HepG2 (cell line): ENCODE measurements at regions of chr17 and their contacts with region 1.

Region 1: DNA sequence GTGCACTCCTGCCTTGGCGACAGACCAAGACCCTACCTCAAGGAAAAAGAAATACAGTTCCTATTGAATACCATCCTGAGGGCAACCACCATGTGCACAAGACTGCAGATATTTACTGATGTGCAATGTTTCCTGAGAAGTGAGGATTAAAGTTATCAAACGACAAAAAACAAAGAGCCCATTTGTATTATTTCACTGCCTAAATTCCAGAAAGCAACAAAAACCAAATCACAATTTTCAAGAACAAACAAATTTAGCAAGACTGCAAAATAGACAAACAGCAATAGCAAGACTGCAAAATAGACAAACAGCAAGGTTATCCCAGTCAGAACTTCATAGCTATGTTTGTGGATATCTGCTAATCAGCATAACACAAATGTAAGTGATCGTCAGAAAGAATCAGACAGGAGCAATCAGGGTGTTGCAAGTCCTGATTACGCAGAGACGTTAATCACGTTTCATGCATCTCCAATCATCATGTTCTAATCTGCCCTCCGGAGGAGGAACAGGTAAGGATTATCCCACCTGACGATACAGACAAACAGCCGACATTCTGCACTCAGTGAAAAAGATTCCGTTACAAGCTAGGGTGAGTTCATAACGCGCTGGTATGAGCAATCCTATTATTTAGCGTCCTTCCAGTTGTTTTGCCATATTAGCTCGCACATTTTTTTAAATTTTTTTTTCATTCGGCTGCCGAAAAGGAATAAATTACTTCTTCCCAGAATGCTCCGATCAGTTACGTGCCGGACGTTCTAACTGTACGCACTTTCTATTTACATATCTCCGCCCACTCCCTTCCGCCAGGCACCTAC is 2.9 kb downstream of the TMEM107 start:
- DNase-seq: peak; percentile 98
- ATAC-seq: peak; percentile 70
- H3K4me3 ChIP-seq: peak overlapping the region; percentile 60 to 78 (median 73)
- H3K27ac ChIP-seq: peak overlapping the region; percentile 97
- H3K4me1 ChIP-seq: peaks cover 46% of the 10 kb centered on the region
- H3K27me3 ChIP-seq: no peaks in the 10 kb centered on the region; a peak in 1 of 5 replicates
- CTCF ChIP-seq: no peak
- EP300 ChIP-seq: peak; percentile 12 to 83; a peak in 3 of 4 replicates
- POLR2A ChIP-seq: peak; percentile 100
- RAD21 ChIP-seq: peak; percentile 70

Region 2: GRCh38 chr17:8029135-8029534 is 144.1 kb before region 1 on chr17:
- CTCF ChIA-PET with region 1: no interaction called
- POLR2A ChIA-PET with region 1: no interaction called
- in situ Hi-C with region 1: no loop called
- intact Hi-C with region 1: no loop called
- DNase-seq: no peak
- ATAC-seq: no peak
- H3K4me3 ChIP-seq: no peak overlapping the region
- H3K27ac ChIP-seq: no peak overlapping the region
- H3K4me1 ChIP-seq: peaks cover 19% of the 10 kb centered on the region
- H3K27me3 ChIP-seq: peaks cover 1 to 27% of the 10 kb centered on the region in 2 experiments; a peak in 2 of 5 replicates
- CTCF ChIP-seq: no peak
- EP300 ChIP-seq: no peak
- POLR2A ChIP-seq: no peak
- RAD21 ChIP-seq: no peak

Region 3: DNA sequence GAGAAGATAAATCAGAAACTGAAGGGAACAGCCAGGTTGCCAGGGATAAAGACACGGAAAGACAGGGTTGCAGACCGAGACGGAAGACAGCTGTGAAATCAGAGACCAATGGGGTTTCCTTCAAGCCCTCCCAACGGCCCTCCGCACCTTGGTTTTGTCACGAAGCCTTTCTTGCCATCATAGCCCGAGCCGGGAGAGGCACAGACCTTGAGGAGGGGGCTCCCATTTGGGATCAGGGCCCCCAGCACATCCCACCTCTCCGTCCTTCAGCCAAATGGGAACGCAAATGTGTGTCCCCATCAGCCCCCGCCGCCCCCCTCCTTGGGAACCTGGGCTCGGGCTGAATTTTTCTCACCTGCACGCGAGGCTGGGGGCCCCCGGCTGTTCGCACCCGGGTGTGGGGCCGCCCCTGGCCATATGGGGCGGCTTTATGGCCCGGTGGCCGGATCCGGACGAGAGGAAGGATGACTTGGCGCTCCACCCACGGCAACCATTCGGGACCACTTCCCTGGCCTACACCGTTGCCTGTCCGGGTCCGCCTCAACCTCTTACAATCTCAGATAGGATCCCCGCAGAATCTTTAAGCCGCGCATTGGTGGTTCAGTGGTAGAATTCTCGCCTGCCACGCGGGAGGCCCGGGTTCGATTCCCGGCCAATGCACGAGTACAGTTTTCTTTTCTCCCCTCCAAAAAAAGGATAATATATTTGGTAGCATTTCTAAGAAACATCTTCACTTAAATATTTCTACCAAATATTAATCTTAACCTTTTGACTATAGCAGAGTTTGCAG is 47.9 kb before region 1 on chr17:
- CTCF ChIA-PET with region 1: no interaction called
- POLR2A ChIA-PET with region 1: interaction called, 35 read pairs
- in situ Hi-C with region 1: no loop called
- intact Hi-C with region 1: no loop called
- DNase-seq: peak; percentile 64
- ATAC-seq: peak; percentile 6; the same call in 2 of the 3 replicates
- H3K4me3 ChIP-seq: peak overlapping the region; percentile 58 to 95 (median 68)
- H3K27ac ChIP-seq: no peak overlapping the region
- H3K4me1 ChIP-seq: peaks cover 49% of the 10 kb centered on the region
- H3K27me3 ChIP-seq: peaks cover 5 to 43% of the 10 kb centered on the region in 2 experiments
- CTCF ChIP-seq: no peak
- EP300 ChIP-seq: no peak
- POLR2A ChIP-seq: no peak
- RAD21 ChIP-seq: no peak

Region 4: DNA sequence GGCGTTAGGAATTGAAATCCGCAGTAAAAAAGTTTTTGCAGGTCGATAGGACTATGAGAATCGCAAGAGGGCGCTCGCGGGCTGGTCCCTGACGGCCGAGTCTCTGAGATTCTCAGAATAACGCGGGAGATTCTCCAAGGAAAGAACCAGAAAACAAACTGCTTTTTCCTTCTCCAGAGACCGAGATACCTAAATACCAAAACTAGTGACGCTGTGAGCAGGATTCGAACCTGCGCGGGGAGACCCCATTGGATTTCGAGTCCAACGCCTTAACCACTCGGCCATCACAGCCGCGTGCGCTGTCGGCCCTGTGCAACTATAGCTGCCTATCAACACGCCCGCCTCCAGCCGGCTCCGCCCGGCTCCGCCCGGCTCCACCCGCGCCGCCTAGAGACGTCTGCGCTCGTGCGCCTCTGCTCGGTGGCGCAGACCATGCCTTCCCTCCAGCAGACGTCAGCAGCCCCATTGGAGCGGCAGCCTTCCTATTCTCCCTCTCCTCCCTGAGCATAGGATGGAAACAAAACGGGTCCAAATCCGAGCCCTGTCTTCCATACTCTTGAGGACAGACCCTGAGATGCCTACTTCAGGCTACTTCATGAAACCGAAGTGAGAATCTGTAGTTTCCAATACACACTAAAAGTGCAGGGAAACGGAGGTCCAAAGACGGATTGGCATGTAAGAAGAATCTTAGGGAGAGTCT is 34.4 kb before region 1 on chr17:
- CTCF ChIA-PET with region 1: no interaction called
- POLR2A ChIA-PET with region 1: interaction called, 15 read pairs
- in situ Hi-C with region 1: no loop called
- intact Hi-C with region 1: loop called (anchors 2 kb)
- DNase-seq: peak; percentile 96
- ATAC-seq: peak; percentile 93
- H3K4me3 ChIP-seq: peak overlapping the region; percentile 71 to 86 (median 79)
- H3K27ac ChIP-seq: peak overlapping the region; percentile 74
- H3K4me1 ChIP-seq: peaks cover 36% of the 10 kb centered on the region
- H3K27me3 ChIP-seq: no peaks in the 10 kb centered on the region; a peak in 1 of 5 replicates
- CTCF ChIP-seq: peak; percentile 70
- EP300 ChIP-seq: peak in 1 of 2 experiments; percentile 51; a peak in 2 of 4 replicates
- POLR2A ChIP-seq: no peak
- RAD21 ChIP-seq: peak; percentile 84

Region 5: GRCh38 chr17:8162233-8162996 is 10.8 kb before region 1 on chr17 and contains the start of gene VAMP2:
- CTCF ChIA-PET with region 1: no interaction called
- POLR2A ChIA-PET with region 1: interaction called, 149 read pairs
- in situ Hi-C with region 1: no loop called
- intact Hi-C with region 1: no loop called
- DNase-seq: no peak
- ATAC-seq: peak; percentile 11
- H3K4me3 ChIP-seq: peak within 1 kb of the TSS; percentile 92 to 99 (median 98)
- H3K27ac ChIP-seq: peak within 1 kb of the TSS; percentile 95
- H3K4me1 ChIP-seq: peaks cover 66% of the 10 kb centered on the region
- H3K27me3 ChIP-seq: no peaks in the 10 kb centered on the region; a peak in 1 of 5 replicates
- CTCF ChIP-seq: no peak
- EP300 ChIP-seq: no peak
- POLR2A ChIP-seq: peak in 1 of 2 experiments; percentile 75; a peak in 3 of 4 replicates
- RAD21 ChIP-seq: peak; percentile 28; the same call in 1 of the 2 replicates
- total RNA-seq, gene VAMP2: 2.0 and 3.9 TPM in 2 replicates

Region 6: DNA sequence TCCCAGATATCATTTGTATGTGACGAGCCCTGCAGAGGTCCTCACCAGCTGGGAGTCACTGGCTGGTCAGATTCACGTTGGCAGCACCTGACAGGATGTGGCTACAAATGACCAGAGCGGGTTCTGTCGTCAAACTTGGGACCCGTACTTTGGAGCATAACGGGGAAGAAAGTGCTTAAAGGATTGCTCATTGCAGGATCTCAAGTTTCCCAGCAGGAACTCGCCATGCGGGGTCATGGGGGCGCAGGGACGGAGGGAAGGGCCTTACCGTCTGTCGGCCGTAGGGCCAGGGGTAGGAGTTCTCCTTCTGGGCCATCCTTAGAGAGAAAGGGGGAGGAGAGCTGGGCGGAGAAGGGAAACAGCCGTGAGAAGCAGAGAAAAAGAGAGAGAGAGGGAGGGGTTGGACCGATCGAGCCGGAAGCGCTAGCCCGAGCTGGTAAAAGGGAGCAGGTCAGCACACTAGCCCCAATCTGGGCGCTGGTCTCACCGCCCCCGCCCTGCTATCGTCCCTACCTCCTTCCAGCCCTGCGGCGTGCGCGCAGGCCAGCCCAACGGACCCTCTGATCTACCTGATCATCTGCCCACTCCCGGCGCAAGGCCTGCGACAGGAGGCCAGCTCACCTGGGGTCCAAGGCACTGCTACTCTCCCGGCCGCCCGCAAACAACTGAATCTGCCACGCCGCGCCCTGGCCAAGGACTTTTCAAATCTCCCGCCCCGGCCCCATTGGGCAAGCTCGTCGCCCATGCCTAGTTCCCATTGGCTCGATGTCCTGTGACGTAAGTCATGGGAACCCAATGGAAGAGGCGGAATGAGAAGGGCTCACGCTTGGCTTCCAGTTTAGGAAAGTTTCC is 36.9 kb after region 1 on chr17 and contains the start of gene AURKB:
- CTCF ChIA-PET with region 1: no interaction called
- POLR2A ChIA-PET with region 1: interaction called, 24 read pairs
- in situ Hi-C with region 1: no loop called
- intact Hi-C with region 1: loop called (anchors 1 kb)
- DNase-seq: peak; percentile 96
- ATAC-seq: peak; percentile 82
- H3K4me3 ChIP-seq: peak within 1 kb of the TSS; percentile 71 to 87 (median 75)
- H3K27ac ChIP-seq: peak within 1 kb of the TSS; percentile 91
- H3K4me1 ChIP-seq: peaks cover 41% of the 10 kb centered on the region
- H3K27me3 ChIP-seq: no peaks in the 10 kb centered on the region; a peak in 1 of 5 replicates
- CTCF ChIP-seq: no peak
- EP300 ChIP-seq: no peak
- POLR2A ChIP-seq: peak; percentile 88 to 89
- RAD21 ChIP-seq: no peak
- total RNA-seq, gene AURKB: 67.7 and 75.3 TPM in 2 replicates

Region 7: GRCh38 chr17:8248751-8249607 is 75.7 kb after region 1 on chr17 and contains the start of gene PFAS:
- CTCF ChIA-PET with region 1: no interaction called
- POLR2A ChIA-PET with region 1: interaction called, 22 read pairs
- in situ Hi-C with region 1: no loop called
- intact Hi-C with region 1: no loop called
- DNase-seq: peak; percentile 87
- ATAC-seq: peak; percentile 59
- H3K4me3 ChIP-seq: peak within 1 kb of the TSS; percentile 74 to 100 (median 96)
- H3K27ac ChIP-seq: peak within 1 kb of the TSS; percentile 98
- H3K4me1 ChIP-seq: peaks cover 32% of the 10 kb centered on the region
- H3K27me3 ChIP-seq: no peaks in the 10 kb centered on the region; a peak in 1 of 5 replicates
- CTCF ChIP-seq: no peak
- EP300 ChIP-seq: peak in 1 of 2 experiments; percentile 58; a peak in 2 of 4 replicates
- POLR2A ChIP-seq: peak; percentile 88 to 89
- RAD21 ChIP-seq: no peak
- total RNA-seq, gene PFAS: 42.8 and 58.2 TPM in 2 replicates